ENCODE measurements at regions of chr5 and their contacts with region 1.

Region 1: GRCh38 chr5:57179262-57180200 is 5.7 kb downstream of the GPBP1 start:
- DNase-seq: no peak
- ATAC-seq: no peak; the same call in 1 of the 2 replicates
- H3K4me3 ChIP-seq: no peak overlapping the region
- H3K27ac ChIP-seq: no peak overlapping the region
- H3K4me1 ChIP-seq: peaks cover 4% of the 10 kb centered on the region; the same call in 1 of the 2 replicates
- H3K27me3 ChIP-seq: no peaks in the 10 kb centered on the region
- CTCF ChIP-seq: no peak
- POLR2A ChIP-seq: no peak
- RAD21 ChIP-seq: no peak

Region 2: DNA sequence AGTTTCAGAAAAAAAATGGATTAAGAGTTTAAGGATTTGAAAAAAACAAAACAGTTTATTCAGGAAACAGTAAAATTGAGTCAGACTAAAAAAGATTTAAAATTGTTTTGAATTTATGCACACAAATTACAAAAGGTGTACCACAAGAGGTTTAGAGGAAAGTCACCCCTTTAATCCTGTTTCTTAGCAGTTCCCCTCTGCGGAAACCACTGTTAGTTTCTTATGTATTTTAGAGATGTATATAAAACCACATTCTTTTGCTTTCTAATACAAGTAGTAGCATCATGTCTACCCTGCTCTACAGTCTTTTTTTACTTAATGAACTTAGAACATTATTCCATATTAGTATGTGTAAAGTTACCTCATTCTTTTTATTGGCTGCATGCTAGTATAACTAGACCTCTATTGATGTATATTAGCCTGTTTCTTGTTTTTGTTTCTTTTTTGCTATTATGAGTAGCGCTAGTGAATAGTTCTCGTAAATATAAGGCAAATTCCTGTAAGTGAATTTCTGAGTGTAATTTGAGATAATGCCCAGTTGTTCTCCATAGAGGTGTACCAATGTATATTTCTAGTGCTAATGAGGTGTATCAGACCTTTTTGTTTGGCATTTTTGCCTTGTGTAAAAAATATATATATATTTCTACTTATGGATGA is 14.4 kb after region 1 on chr5:
- CTCF ChIA-PET with region 1: no interaction called
- POLR2A ChIA-PET with region 1: interaction called, 17 read pairs
- dilution Hi-C with region 1: no loop called
- in situ Hi-C with region 1: no loop called
- intact Hi-C with region 1: no loop called
- DNase-seq: no peak
- ATAC-seq: no peak
- H3K4me3 ChIP-seq: no peak overlapping the region
- H3K27ac ChIP-seq: no peak overlapping the region
- H3K4me1 ChIP-seq: peaks cover 3% of the 10 kb centered on the region; the same call in 1 of the 2 replicates
- H3K27me3 ChIP-seq: no peaks in the 10 kb centered on the region
- CTCF ChIP-seq: no peak
- POLR2A ChIP-seq: no peak
- RAD21 ChIP-seq: no peak

Region 3: GRCh38 chr5:58629271-58630159 is 1450.0 kb after region 1 on chr5:
- CTCF ChIA-PET with region 1: no interaction called
- POLR2A ChIA-PET with region 1: no interaction called
- dilution Hi-C with region 1: no loop called
- in situ Hi-C with region 1: no loop called
- intact Hi-C with region 1: no loop called
- DNase-seq: no peak
- ATAC-seq: no peak
- H3K4me3 ChIP-seq: no peak overlapping the region
- H3K27ac ChIP-seq: no peak overlapping the region
- H3K4me1 ChIP-seq: no peaks in the 10 kb centered on the region
- H3K27me3 ChIP-seq: no peaks in the 10 kb centered on the region
- CTCF ChIP-seq: no peak
- POLR2A ChIP-seq: no peak
- RAD21 ChIP-seq: no peak